PC-9 (cell line): ENCODE measurements at regions of chr4 and their contacts with region 1.

Region 1: DNA sequence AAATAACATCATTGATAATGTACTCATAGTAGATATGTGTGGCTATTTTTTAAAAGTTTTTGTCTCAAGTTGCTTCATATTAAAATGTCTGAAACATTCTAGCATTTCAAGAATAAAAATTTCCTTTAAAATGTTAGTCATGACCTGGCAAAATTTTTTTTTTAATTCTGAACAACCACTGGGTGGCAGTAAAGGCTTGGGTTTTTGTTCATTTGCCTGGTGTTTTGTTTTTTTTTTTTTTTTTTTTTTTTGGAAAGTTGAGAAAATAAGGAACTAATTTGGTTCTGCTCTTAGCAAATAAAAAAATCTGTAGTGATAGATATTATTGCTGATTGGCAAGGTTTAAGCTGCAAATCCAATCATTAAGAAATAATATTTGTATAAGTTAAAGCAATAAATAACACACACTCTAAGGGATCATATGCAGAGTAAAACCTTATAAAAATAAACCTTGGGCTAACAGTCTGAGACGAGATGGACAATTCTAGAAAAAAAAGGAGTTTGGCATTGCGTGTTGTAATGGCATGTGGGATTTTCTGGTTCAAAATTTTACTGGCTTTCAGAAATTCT is 81.4 kb downstream of the CEP44 start:
- DNase-seq: peak in 1 of 2 experiments; percentile 20
- H3K4me3 ChIP-seq: no peak overlapping the region
- H3K27ac ChIP-seq: no peak overlapping the region
- H3K4me1 ChIP-seq: no peaks in the 10 kb centered on the region
- H3K27me3 ChIP-seq: no peaks in the 10 kb centered on the region
- CTCF ChIP-seq: peak; percentile 70

Region 2: DNA sequence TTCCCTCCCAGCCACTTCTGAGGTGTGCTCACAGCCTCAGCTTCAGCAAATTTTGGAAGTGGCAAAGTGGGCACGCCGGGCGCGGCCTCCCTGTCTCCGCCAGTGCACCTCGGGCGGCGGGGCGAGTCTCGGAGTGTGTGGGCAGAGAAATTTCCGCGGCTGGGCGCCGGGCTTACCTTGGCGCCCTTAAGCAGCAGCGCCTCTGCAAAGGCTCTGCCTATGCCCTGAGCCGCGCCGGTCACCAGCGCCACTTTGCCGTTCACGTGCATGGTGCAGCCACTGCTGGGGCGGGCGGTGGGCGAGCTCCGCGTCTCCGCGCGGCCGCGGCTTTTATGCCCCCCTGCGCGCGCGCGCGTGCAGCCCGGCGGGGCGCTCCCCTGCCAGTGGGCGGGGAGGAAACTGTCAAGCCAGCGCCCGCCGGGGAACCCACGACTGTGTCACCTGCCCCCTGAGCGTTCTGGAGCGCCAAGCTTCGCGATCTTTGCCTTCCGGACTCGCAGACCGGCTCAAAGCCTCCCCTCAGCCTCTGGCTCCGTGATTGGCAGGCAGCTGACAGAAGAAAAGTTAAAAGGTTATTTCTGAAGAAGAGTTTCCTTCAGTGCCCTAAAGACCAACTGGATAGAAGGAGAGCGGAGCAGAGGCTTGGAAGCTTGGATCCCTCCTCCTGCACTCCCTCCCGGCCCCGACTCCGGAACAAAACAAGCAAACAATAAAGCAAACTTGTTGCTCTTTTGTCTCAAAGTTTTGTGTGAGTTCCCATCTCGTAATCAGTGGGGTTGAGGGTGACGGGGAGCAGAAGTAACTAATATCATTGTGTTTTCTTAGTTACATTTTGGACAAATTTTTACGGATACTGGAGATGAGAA is 157.3 kb after region 1 on chr4 and contains the start of gene HPGD:
- CTCF ChIA-PET with region 1: no interaction called
- POLR2A ChIA-PET with region 1: no interaction called
- intact Hi-C with region 1: loop called (anchors 2 kb)
- DNase-seq: peak in 1 of 2 experiments; percentile 37
- H3K4me3 ChIP-seq: peak within 1 kb of the TSS; percentile 55; the same call in 1 of the 2 replicates
- H3K27ac ChIP-seq: no peak within 1 kb of the TSS
- H3K4me1 ChIP-seq: no peaks in the 10 kb centered on the region
- H3K27me3 ChIP-seq: no peaks in the 10 kb centered on the region
- CTCF ChIP-seq: no peak
- total RNA-seq, gene HPGD: 0.96 and 1.7 TPM in 2 replicates

Region 3: DNA sequence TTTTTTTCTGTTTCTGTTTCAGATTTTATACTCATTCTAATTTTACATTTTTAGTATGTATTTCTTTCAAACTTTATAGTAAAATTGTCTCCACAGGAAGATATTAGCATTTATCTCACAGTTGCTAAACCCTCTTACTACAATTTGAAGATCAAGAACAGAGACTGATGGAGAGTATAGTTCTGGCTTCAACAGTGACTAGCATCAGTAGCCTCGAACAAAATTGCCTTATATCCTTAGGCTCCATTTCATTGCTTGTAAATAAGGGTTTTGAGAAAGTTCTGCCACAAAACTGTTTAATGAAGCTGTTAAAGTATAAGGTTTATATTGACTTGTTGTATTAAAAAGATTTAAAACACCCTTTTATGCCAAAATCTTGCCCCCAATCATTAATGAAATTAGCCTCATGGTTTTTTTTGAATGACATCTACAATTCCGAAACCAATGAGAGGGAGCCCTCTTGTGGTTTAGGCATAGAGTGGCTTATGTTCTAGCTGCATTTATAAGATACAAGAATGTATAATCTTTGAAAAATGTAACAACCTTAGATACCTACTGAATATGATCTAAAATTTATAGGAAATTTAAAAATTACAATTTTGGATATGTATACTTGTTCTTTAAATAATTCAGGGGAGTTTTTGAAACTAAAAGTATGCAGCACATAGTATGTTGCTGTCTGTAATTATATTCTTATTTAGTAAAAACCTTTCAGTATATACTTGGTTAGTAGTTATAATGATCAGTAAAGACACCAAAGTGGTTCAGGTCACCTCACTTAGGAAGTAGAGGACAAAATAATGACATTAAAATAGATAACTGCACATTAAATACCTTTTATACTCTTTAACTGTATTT is 267.0 kb after region 1 on chr4:
- CTCF ChIA-PET with region 1: interaction called, 15 read pairs
- POLR2A ChIA-PET with region 1: no interaction called
- intact Hi-C with region 1: loop called (anchors 1 kb)
- DNase-seq: no peak
- H3K4me3 ChIP-seq: no peak overlapping the region
- H3K27ac ChIP-seq: no peak overlapping the region
- H3K4me1 ChIP-seq: no peaks in the 10 kb centered on the region
- H3K27me3 ChIP-seq: no peaks in the 10 kb centered on the region
- CTCF ChIP-seq: peak; percentile 70

Region 4: DNA sequence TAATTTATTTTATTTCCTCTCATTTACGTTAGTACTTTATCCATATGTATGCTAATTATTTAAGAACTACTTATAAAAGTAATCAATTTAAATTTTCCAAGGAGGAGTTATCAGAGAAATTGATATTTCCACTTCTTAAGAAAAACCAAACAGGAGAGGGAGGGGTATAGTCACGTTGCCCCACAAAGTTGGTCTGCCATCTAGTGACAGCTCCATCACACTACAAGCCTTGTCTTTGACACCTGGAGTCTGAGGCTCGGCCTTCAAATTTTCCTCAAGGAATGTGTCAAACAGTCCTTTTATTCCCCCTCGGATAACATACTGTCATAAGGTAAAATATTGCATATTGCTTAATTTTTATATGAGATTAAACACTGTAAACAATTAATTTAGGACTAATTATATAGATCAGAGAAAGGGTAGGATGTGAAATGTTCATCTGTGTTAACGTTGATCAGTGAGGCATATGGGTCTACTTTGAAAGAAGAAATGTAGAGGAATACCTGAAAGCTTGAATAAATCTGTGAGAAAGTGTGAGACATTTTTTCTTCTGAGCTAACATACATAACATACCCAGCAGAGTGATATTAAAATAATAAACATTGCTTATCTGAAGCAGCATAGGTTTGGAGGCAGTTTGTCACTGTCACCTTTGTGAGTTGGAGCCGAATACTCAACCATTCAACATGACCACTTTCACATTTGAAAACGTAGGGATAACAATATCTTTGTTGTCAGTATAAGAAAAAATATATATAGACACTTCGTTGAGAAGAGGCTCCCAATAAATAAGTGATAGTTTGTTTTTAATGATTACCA is 349.5 kb after region 1 on chr4:
- CTCF ChIA-PET with region 1: no interaction called
- POLR2A ChIA-PET with region 1: no interaction called
- intact Hi-C with region 1: loop called (anchors 2 kb)
- DNase-seq: peak; percentile 26 to 34
- H3K4me3 ChIP-seq: no peak overlapping the region
- H3K27ac ChIP-seq: no peak overlapping the region
- H3K4me1 ChIP-seq: no peaks in the 10 kb centered on the region
- H3K27me3 ChIP-seq: no peaks in the 10 kb centered on the region
- CTCF ChIP-seq: peak; percentile 73

Region 5: GRCh38 chr4:176277162-176277904 is 1912.2 kb after region 1 on chr4:
- CTCF ChIA-PET with region 1: no interaction called
- POLR2A ChIA-PET with region 1: no interaction called
- intact Hi-C with region 1: no loop called
- DNase-seq: peak; percentile 47 to 48
- H3K4me3 ChIP-seq: no peak overlapping the region
- H3K27ac ChIP-seq: no peak overlapping the region
- H3K4me1 ChIP-seq: peaks cover 13% of the 10 kb centered on the region
- H3K27me3 ChIP-seq: no peaks in the 10 kb centered on the region
- CTCF ChIP-seq: peak; percentile 52